ENCODE measurements at regions of chr5 and their contacts with region 1.

Region 1: DNA sequence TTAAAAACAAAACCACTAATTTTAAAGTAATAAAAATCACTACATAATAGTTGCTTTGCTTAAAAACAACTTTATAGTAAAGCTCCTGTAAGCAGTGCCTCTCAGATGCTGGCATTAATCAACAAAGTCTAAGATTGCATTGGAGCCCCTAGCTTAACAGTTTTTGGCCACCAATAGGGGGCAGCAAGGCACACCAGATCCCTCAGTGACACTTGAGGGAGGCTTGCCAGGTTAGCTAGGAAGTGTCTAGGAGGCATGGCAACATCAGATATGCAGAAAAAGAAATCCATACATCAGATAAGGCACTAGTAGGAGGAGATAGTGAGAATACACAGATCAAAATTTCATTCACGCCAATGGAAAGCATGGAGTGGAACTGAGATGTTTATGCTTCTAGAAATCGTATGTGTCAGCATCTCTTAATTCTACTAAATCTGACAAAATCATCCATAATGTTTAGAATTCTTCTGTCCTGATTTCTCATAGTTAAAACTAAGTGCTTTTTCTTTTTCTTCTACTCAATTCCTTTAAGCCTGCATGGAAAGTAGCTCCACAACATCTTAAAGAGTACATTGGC is 73.6 kb upstream of the PAM start:
- DNase-seq: peak; percentile 87
- H3K4me3 Mint-ChIP-seq: no peak overlapping the region
- H3K27ac Mint-ChIP-seq: no peak overlapping the region
- H3K4me1 Mint-ChIP-seq: no peaks in the 10 kb centered on the region
- H3K27me3 Mint-ChIP-seq: peaks cover 17% of the 10 kb centered on the region

Region 2: DNA sequence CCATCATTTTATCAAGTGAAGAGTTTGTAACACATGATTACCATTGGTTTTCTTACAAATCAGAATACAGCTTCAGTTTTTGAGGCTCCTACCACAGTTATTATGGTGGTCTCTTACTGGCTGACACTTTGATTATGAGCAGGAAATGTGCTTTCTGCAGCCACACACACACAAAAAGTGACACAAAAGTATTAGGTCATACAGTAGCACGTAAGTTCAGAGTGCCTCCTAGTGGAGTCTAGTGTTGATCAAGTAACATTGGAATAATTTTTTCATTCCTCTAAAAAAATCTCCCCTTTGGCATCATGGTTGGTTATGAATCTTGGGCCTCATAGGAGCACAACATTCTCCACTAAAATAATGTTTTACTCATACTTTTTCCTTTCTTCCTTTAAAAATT is 111.2 kb after region 1 on chr5:
- intact Hi-C with region 1: loop called (anchors 1 kb)
- DNase-seq: no peak
- H3K4me3 Mint-ChIP-seq: no peak overlapping the region
- H3K27ac Mint-ChIP-seq: no peak overlapping the region
- H3K4me1 Mint-ChIP-seq: peaks cover 15% of the 10 kb centered on the region
- H3K27me3 Mint-ChIP-seq: no peaks in the 10 kb centered on the region

Region 3: DNA sequence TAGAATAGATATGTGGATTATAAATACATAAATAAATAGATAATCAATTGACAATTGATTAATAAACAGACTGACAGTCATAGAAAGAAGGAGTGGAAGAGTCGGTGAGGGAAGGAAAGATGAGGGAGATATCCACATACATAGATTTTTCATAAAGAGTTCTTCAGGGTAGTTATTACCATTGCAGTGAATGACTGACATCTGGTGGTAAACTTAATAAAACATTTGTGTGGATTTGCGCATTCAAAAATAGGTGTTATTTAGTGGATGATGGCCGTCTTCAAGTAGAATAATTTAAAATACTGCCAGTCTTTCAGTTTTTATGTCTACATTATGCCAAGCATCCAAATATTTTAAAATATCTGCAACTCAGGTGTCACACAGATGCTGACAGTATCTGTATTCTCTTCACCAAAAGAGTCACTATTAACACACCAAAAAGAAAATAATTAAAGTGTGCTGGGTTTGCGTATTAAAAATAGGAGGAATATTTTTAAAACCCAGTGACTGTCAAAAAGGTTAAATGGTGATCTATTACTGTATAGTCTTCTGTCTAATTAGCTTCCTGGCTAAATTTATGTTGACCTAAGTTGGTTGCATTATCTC is 359.7 kb after region 1 on chr5:
- intact Hi-C with region 1: loop called (anchors 2 kb)
- DNase-seq: no peak
- H3K4me3 Mint-ChIP-seq: no peak overlapping the region
- H3K27ac Mint-ChIP-seq: no peak overlapping the region
- H3K4me1 Mint-ChIP-seq: no peaks in the 10 kb centered on the region
- H3K27me3 Mint-ChIP-seq: peaks cover 25% of the 10 kb centered on the region

Measured in activated CD4-positive, alpha-beta T cell treated with anti-CD3 and anti-CD28 coated beads, Interleukin-2, amount 10 ng/mL, durations not matched to agents 24 days and 14 days (primary cell).